CD4-positive, alpha-beta T cell (primary cell): ENCODE measurements at regions of chr2 and their contacts with region 1.

Region 1: DNA sequence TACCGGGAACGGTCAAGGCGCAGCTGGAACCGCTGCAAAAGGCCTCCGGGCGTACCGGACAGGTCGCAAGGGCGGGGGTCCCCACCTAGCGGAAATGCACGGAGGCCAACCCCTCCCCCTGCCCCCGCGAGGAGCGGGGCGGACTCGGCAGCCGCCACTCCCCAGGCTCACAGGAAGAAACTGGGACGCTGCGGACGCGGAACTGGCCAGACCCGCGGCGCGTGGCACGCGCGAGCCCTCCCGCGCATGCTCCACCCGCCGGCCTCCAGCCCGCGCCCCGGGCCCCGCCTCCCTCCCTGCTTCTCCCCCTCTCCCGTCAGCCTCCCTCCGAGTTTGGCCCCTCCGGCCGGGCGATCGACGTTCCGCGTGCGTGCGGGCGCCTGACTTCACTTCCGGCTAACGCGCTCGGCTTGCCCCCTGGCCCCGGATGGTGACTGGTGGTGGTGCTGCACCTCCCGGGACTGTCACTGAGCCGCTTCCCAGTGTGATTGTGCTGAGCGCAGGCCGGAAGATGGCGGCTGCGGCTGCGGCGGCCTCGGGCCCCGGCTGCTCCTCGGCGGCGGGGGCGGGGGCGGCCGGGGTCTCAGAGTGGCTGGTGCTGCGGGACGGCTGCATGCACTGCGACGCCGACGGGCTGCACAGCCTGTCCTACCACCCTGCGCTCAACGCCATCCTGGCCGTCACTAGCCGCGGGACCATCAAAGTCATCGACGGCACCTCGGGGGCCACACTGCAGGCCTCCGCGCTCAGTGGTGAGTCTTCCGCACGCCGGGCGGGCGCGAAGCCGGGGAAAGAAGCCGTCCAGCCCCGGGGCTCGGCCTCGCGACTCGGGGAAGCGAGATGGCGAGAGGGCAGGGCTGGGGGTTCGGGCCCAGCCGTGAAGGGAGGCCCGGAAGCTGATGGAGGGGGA is at the start of gene BIRC6:
- DNase-seq: peak; percentile 71 to 96 (median 89)
- ATAC-seq: peak; percentile 89
- H3K4me3 ChIP-seq: peak within 1 kb of the TSS; percentile 97
- H3K4me3 Mint-ChIP-seq: peak within 1 kb of the TSS; percentile 98
- H3K27ac ChIP-seq: peak within 1 kb of the TSS; percentile 75 to 87
- H3K27ac Mint-ChIP-seq: peak within 1 kb of the TSS; percentile 81
- H3K4me1 ChIP-seq: peaks cover 23% of the 10 kb centered on the region
- H3K4me1 Mint-ChIP-seq: peaks cover 44% of the 10 kb centered on the region
- H3K27me3 ChIP-seq: no peaks in the 10 kb centered on the region
- H3K27me3 Mint-ChIP-seq: no peaks in the 10 kb centered on the region
- CTCF ChIP-seq: no peak
- total RNA-seq, gene BIRC6: 110 to 113 TPM

Region 2: GRCh38 chr2:32168513-32168912 is 188.5 kb before region 1 on chr2:
- CTCF ChIA-PET with region 1: no interaction called
- POLR2A ChIA-PET with region 1: no interaction called
- intact Hi-C with region 1: loop called in 1 of 2 experiments (anchors 2 kb)
- DNase-seq: no peak
- ATAC-seq: no peak
- H3K4me3 ChIP-seq: no peak overlapping the region
- H3K4me3 Mint-ChIP-seq: peak overlapping the region; percentile 1
- H3K27ac ChIP-seq: no peak overlapping the region
- H3K27ac Mint-ChIP-seq: no peak overlapping the region
- H3K4me1 ChIP-seq: peaks cover 4% of the 10 kb centered on the region
- H3K4me1 Mint-ChIP-seq: peaks cover 56% of the 10 kb centered on the region
- H3K27me3 ChIP-seq: no peaks in the 10 kb centered on the region
- H3K27me3 Mint-ChIP-seq: no peaks in the 10 kb centered on the region
- CTCF ChIP-seq: no peak

Region 3: GRCh38 chr2:32277674-32278482 is 79.1 kb before region 1 on chr2 and contains the start of gene YIPF4:
- CTCF ChIA-PET with region 1: no interaction called
- POLR2A ChIA-PET with region 1: interaction called, 3 read pairs
- intact Hi-C with region 1: loop called in 1 of 2 experiments (anchors 1 kb)
- DNase-seq: peak; percentile 79 to 94 (median 86)
- ATAC-seq: peak; percentile 98
- H3K4me3 ChIP-seq: peak within 1 kb of the TSS; percentile 85
- H3K4me3 Mint-ChIP-seq: peak within 1 kb of the TSS; percentile 97
- H3K27ac ChIP-seq: peak within 1 kb of the TSS; percentile 80 to 81
- H3K27ac Mint-ChIP-seq: peak within 1 kb of the TSS; percentile 99
- H3K4me1 ChIP-seq: peaks cover 36% of the 10 kb centered on the region
- H3K4me1 Mint-ChIP-seq: peaks cover 32% of the 10 kb centered on the region
- H3K27me3 ChIP-seq: no peaks in the 10 kb centered on the region
- H3K27me3 Mint-ChIP-seq: no peaks in the 10 kb centered on the region
- CTCF ChIP-seq: no peak
- total RNA-seq, gene YIPF4: 7.7 to 9.7 TPM

Region 4: GRCh38 chr2:32627814-32628579 is 271.0 kb after region 1 on chr2 and contains the start of gene TTC27:
- CTCF ChIA-PET with region 1: no interaction called
- POLR2A ChIA-PET with region 1: interaction called, 3 read pairs
- intact Hi-C with region 1: loop called in 1 of 2 experiments (anchors 5 kb)
- DNase-seq: peak; percentile 91 to 97 (median 94)
- ATAC-seq: peak; percentile 99
- H3K4me3 ChIP-seq: peak within 1 kb of the TSS; percentile 88
- H3K4me3 Mint-ChIP-seq: peak within 1 kb of the TSS; percentile 96
- H3K27ac ChIP-seq: peak within 1 kb of the TSS; percentile 50 to 60
- H3K27ac Mint-ChIP-seq: peak within 1 kb of the TSS; percentile 81
- H3K4me1 ChIP-seq: peaks cover 18% of the 10 kb centered on the region
- H3K4me1 Mint-ChIP-seq: peaks cover 39% of the 10 kb centered on the region
- H3K27me3 ChIP-seq: no peaks in the 10 kb centered on the region
- H3K27me3 Mint-ChIP-seq: no peaks in the 10 kb centered on the region
- CTCF ChIP-seq: no peak
- total RNA-seq, gene TTC27: 11.6 to 17.6 TPM